ENCODE measurements at regions of chr12 and their contacts with region 1.

Region 1: DNA sequence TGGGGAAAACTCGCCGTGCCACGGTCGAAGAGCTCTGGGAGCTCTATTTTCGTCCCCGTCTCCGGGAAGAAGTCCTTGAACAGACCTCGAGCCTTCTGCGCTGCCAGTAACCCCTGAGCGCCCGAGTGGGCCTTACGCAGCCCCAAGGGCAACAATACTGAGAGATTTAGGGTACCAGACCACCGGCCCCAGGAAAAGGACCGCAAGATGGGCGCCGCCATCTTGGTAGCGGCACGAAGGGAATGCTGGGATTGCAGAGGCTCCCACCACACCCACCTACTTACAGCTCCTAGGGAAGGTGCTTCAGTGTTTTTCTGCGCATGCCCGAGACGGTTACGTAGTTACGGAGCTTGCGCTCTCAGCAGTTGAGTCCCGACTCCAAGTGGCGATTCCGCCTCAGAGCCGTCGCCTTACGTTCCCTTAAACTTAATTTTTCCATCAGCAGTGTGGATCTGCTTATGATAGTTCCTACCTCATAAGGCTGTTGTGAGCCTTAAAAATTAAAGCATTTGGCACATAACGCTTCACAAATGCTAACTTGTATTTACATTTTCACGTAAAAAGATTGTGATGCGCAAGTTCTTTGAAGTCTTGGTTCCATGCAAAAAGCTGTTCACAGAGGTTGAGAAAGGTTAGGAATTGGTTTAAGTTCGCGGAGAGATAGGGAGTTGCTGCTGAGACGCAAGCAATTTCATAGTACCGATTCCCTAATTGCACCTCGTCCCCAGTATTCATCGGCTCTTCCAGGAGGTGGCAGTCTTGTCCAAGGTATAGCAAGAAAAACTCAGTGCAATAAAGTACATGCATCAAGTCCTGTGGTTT is at the start of gene YARS2:
- DNase-seq: peak; percentile 97
- ATAC-seq: peak; percentile 95
- H3K4me3 ChIP-seq: peak within 1 kb of the TSS; percentile 98 to 99
- H3K27ac ChIP-seq: peak within 1 kb of the TSS; percentile 76
- H3K4me1 ChIP-seq: peaks cover 6 to 15% of the 10 kb centered on the region in 2 experiments; a peak in 2 of 4 replicates
- H3K27me3 ChIP-seq: no peaks in the 10 kb centered on the region
- CTCF ChIP-seq: peak; percentile 60 to 95 (median 87); a peak in 5 of 6 replicates
- POLR2A ChIP-seq: peak; percentile 94
- RAD21 ChIP-seq: peak; percentile 97
- total RNA-seq, gene YARS2: 26.7 TPM

Region 2: GRCh38 chr12:32365473-32366064 is 390.3 kb before region 1 on chr12:
- CTCF ChIA-PET with region 1: interaction called, 25 read pairs
- POLR2A ChIA-PET with region 1: no interaction called
- RAD21 ChIA-PET with region 1: no interaction called
- intact Hi-C with region 1: loop called (anchors 1 kb)
- DNase-seq: peak; percentile 58
- ATAC-seq: peak; percentile 91
- H3K4me3 ChIP-seq: no peak overlapping the region
- H3K27ac ChIP-seq: no peak overlapping the region
- H3K4me1 ChIP-seq: no peaks in the 10 kb centered on the region
- H3K27me3 ChIP-seq: no peaks in the 10 kb centered on the region
- CTCF ChIP-seq: peak; percentile 74 to 93 (median 76)
- POLR2A ChIP-seq: no peak
- RAD21 ChIP-seq: peak; percentile 88

Region 3: DNA sequence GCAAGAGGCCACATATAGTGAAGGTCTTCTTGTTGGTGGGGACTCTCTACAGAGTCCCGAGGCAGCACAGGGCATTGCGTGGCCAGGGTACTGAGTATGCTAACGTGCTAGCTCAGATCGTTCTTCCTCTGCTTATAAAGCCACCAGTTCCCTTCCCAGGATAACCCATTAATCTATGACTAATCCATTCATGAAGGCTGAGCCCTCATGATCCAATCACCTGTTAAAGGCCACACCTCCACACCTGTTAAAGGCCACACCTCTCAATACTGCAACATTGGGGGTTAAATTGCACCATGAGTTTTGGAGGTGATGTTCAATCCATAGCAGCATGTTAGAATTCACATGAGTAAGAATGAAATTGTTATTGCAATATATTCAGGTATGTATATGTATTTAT is 12.7 kb after region 1 on chr12:
- CTCF ChIA-PET with region 1: interaction called, 11 read pairs
- POLR2A ChIA-PET with region 1: interaction called, 3 read pairs
- RAD21 ChIA-PET with region 1: no interaction called
- intact Hi-C with region 1: no loop called
- DNase-seq: no peak
- ATAC-seq: no peak
- H3K4me3 ChIP-seq: no peak overlapping the region
- H3K27ac ChIP-seq: no peak overlapping the region
- H3K4me1 ChIP-seq: no peaks in the 10 kb centered on the region
- H3K27me3 ChIP-seq: no peaks in the 10 kb centered on the region
- CTCF ChIP-seq: no peak
- POLR2A ChIP-seq: no peak
- RAD21 ChIP-seq: no peak

Region 4: DNA sequence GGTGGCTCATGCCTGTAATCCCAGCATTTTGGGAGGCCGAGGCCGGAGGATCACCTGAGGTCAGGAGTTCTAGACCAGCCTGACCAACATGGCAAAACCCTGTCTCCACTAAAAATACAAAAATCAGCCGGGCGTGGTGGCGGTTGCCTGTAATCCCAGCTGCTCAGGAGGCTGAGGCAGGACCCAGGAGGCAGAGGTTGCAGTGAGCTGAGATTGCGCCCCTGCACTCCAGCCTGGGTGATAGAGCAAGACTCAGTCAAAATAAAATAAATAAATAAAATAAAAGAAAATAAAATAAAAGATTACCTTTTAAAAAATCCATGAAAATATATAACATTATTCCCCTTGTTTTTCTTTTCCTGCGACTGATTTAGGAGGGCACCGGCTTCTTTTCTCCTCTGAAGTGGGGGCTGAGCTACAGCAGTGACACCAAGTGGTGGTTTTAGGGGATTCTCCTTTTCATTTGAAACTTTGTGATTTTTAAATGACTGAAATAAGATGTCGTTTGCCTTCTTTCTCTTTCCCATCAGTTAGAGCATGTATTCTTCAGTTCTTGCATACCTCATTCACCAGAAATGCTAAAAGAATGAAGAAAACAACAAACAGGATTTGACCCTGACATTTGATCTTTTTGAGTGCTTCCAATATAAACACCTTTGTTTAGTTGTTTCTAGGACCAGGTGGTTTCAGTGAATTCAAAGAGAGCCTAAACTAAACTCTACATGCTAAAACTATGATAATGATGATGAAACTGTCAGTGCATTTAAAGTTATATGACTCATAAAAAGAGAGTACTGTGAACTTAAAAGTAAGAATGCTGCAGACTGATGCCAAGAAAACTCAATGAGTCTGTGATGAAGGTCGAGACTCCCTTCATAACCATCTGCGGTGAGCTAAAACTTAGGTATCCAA is 163.3 kb after region 1 on chr12:
- CTCF ChIA-PET with region 1: interaction called, 51 read pairs
- POLR2A ChIA-PET with region 1: interaction called, 9 read pairs
- RAD21 ChIA-PET with region 1: interaction called, 4 to 8 read pairs
- intact Hi-C with region 1: loop called (anchors 1 kb)
- DNase-seq: no peak
- ATAC-seq: peak; percentile 80
- H3K4me3 ChIP-seq: no peak overlapping the region
- H3K27ac ChIP-seq: no peak overlapping the region
- H3K4me1 ChIP-seq: peaks cover 0 to 16% of the 10 kb centered on the region in 2 experiments; a peak in 2 of 4 replicates
- H3K27me3 ChIP-seq: no peaks in the 10 kb centered on the region
- CTCF ChIP-seq: peak; percentile 58 to 61 (median 59); a peak in 5 of 6 replicates
- POLR2A ChIP-seq: no peak
- RAD21 ChIP-seq: peak; percentile 80

Region 5: GRCh38 chr12:34022079-34022830 is 1266.4 kb after region 1 on chr12 and contains the start of gene ALG10:
- CTCF ChIA-PET with region 1: interaction called, 44 read pairs
- POLR2A ChIA-PET with region 1: interaction called, 15 read pairs
- RAD21 ChIA-PET with region 1: interaction called, 9 to 11 read pairs
- intact Hi-C with region 1: loop called (anchors 1 kb)
- DNase-seq: peak; percentile 93
- ATAC-seq: peak; percentile 100
- H3K4me3 ChIP-seq: peak within 1 kb of the TSS; percentile 79 to 87
- H3K27ac ChIP-seq: peak within 1 kb of the TSS; percentile 49
- H3K4me1 ChIP-seq: peaks cover 0 to 8% of the 10 kb centered on the region in 2 experiments; a peak in 2 of 4 replicates
- H3K27me3 ChIP-seq: no peaks in the 10 kb centered on the region
- CTCF ChIP-seq: peak; percentile 57 to 67 (median 62)
- POLR2A ChIP-seq: no peak
- RAD21 ChIP-seq: peak; percentile 86
- total RNA-seq, gene ALG10: 9.6 TPM